Heart left ventricle (tissue), 16 donors: ENCODE measurements at regions of chr4 and their contacts with region 1.

Region 1: DNA sequence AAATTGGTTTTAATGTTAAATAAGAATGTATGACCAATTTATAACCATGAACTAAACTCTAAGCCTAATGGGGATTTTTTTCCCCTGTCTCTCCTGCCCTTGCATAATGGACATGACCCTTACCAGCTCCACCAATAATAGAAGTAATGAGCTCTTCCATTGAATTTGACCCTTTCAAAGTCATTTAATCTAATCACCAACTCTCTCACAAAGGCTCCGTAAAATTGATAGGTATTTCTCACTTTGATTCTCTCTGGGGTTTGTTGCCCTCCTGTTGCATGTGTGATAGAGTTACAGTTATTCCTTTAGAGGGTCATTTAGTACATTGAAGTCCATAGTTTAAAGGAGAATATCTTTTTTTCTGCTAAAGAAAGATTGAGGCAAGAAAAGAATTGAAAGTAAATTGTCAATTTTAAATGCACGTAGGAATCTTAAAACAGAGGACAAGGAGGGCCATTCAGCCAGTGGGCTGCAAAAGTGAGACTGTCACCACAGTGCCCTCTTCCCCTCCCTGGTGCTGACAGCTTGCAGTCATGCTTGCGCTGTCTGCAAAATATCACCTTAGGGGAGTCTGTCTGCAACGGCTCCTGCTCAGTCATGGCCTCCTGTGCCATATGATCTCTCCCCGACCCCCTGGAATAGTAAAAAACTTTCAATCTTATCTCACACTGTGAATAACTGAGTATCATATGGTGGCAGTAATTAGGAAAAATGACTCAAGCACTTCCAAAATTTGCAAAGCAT is 307.5 kb upstream of the GNPDA2 start:
- DNase-seq: peak in 4 of 5 donors; percentile 40 to 62 (median 50)
- ATAC-seq: peak; percentile 93 to 97 (median 97)
- H3K4me3 ChIP-seq: no peak overlapping the region
- H3K27ac ChIP-seq: peak overlapping the region in 5 of 12 donors; percentile 19 to 61 (median 33)
- H3K4me1 ChIP-seq: peaks cover 0 to 13% (median 0%) of the 10 kb centered on the region in 12 donors
- H3K27me3 ChIP-seq: no peaks in the 10 kb centered on the region
- CTCF ChIP-seq: no peak
- POLR2A ChIP-seq: no peak

Region 2: GRCh38 chr4:44961001-44961755 is 72.7 kb before region 1 on chr4:
- intact Hi-C with region 1: no loop called
- DNase-seq: no peak
- ATAC-seq: no peak
- H3K4me3 ChIP-seq: no peak overlapping the region
- H3K27ac ChIP-seq: no peak overlapping the region
- H3K4me1 ChIP-seq: no peaks in the 10 kb centered on the region
- H3K27me3 ChIP-seq: no peaks in the 10 kb centered on the region
- CTCF ChIP-seq: no peak
- POLR2A ChIP-seq: no peak

Region 3: GRCh38 chr4:45120163-45120562 is 86.3 kb after region 1 on chr4:
- intact Hi-C with region 1: loop called in 1 of 10 experiments (anchors 5 kb)
- DNase-seq: peak in 2 of 5 donors; percentile 21 to 31
- ATAC-seq: peak; percentile 96 to 98 (median 96)
- H3K4me3 ChIP-seq: no peak overlapping the region
- H3K27ac ChIP-seq: peak overlapping the region in 9 of 12 donors; percentile 24 to 71 (median 43)
- H3K4me1 ChIP-seq: peaks cover 0 to 3% (median 0%) of the 10 kb centered on the region in 12 donors
- H3K27me3 ChIP-seq: no peaks in the 10 kb centered on the region
- CTCF ChIP-seq: no peak
- POLR2A ChIP-seq: peak in 1 of 2 donors; percentile 35

Region 4: GRCh38 chr4:45172636-45173035 is 138.8 kb after region 1 on chr4:
- intact Hi-C with region 1: no loop called
- DNase-seq: no peak
- ATAC-seq: no peak
- H3K4me3 ChIP-seq: no peak overlapping the region
- H3K27ac ChIP-seq: no peak overlapping the region
- H3K4me1 ChIP-seq: no peaks in the 10 kb centered on the region
- H3K27me3 ChIP-seq: no peaks in the 10 kb centered on the region
- CTCF ChIP-seq: no peak
- POLR2A ChIP-seq: no peak